Activated B cell treated with CpG ODN at 0.5 μM for 24 hours (primary cell): ENCODE measurements at regions of chr5 and their contacts with region 1.

Region 1: GRCh38 chr5:173808134-173808808 is 79.9 kb upstream of the CPEB4 start:
- DNase-seq: no peak
- ATAC-seq: no peak
- H3K4me3 Mint-ChIP-seq: no peak overlapping the region
- H3K27ac Mint-ChIP-seq: no peak overlapping the region
- H3K4me1 Mint-ChIP-seq: peaks cover 9% of the 10 kb centered on the region
- H3K27me3 Mint-ChIP-seq: no peaks in the 10 kb centered on the region
- CTCF ChIP-seq: no peak

Region 2: DNA sequence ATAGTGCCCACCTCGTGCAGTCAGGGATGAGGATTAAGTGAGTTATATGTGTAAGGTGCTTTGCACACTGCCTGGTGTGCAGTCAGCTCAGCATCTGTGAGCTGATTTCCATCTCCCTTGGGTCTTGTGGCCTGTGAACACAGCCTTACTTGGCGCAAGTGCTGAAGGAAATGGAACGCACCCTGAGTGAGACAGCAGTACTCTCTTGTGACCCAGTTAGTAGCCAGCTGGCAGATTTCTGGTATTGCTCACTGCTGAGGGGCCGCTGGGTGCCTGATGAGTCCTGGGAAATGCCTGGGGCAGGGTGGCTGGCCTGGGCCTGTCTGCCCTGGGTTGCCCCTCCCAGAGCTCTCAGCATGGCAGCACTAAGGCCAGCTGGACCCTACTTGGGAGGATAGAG is 100.9 kb before region 1 on chr5:
- CTCF ChIA-PET with region 1: no interaction called
- POLR2A ChIA-PET with region 1: no interaction called
- intact Hi-C with region 1: no loop called
- DNase-seq: peak; percentile 29
- ATAC-seq: peak; percentile 98
- H3K4me3 Mint-ChIP-seq: peak overlapping the region; percentile 4
- H3K27ac Mint-ChIP-seq: peak overlapping the region; percentile 60
- H3K4me1 Mint-ChIP-seq: peaks cover 27% of the 10 kb centered on the region
- H3K27me3 Mint-ChIP-seq: no peaks in the 10 kb centered on the region
- CTCF ChIP-seq: no peak

Region 3: GRCh38 chr5:173727839-173728778 is 80.2 kb before region 1 on chr5:
- CTCF ChIA-PET with region 1: no interaction called
- POLR2A ChIA-PET with region 1: no interaction called
- intact Hi-C with region 1: no loop called
- DNase-seq: no peak
- ATAC-seq: no peak
- H3K4me3 Mint-ChIP-seq: no peak overlapping the region
- H3K27ac Mint-ChIP-seq: no peak overlapping the region
- H3K4me1 Mint-ChIP-seq: peaks cover 13% of the 10 kb centered on the region
- H3K27me3 Mint-ChIP-seq: no peaks in the 10 kb centered on the region
- CTCF ChIP-seq: no peak

Region 4: DNA sequence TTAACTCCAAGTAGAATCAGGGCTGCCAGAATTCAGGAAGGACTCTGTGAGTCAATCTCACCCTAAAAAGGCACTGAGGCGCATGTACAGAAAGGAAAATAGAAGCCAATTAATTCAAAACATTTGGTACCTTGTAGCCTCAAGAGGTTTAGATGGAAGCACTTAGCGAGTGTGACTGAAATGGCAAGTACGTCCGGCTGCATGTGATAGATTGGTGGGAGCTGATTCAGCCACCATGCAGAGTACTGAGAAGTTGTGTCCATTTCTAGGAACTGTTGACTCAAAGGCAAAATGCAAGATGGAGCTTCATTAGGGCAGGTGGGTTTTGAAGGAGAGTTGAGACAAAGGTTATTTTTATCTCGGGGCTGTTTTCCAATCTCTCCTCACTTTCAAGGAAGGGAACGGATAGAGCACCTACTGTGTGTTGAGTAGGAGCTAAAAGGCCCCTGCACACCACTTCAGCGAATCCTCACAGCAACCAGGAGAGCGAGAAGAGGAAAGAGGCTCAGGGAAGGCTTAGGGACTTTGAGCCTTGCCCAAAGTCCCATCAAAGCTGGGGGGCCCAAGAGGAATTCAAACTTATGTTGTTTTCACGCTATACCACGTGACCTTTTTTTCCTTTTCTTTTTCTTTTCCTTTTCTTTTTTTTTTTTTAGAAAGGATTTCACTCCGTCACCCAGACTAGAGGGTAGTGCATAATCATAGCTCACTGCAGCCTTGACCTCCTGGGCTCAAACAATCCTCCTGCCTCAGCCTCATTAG is 45.3 kb after region 1 on chr5:
- CTCF ChIA-PET with region 1: no interaction called
- POLR2A ChIA-PET with region 1: no interaction called
- intact Hi-C with region 1: loop called (anchors 5 kb)
- DNase-seq: no peak
- ATAC-seq: no peak
- H3K4me3 Mint-ChIP-seq: no peak overlapping the region
- H3K27ac Mint-ChIP-seq: no peak overlapping the region
- H3K4me1 Mint-ChIP-seq: peaks cover 7% of the 10 kb centered on the region
- H3K27me3 Mint-ChIP-seq: peaks cover 6% of the 10 kb centered on the region
- CTCF ChIP-seq: no peak

Region 5: GRCh38 chr5:174571662-174572397 is 763.6 kb after region 1 on chr5:
- CTCF ChIA-PET with region 1: no interaction called
- POLR2A ChIA-PET with region 1: no interaction called
- intact Hi-C with region 1: no loop called
- DNase-seq: no peak
- ATAC-seq: no peak
- H3K4me3 Mint-ChIP-seq: no peak overlapping the region
- H3K27ac Mint-ChIP-seq: no peak overlapping the region
- H3K4me1 Mint-ChIP-seq: no peaks in the 10 kb centered on the region
- H3K27me3 Mint-ChIP-seq: peaks cover 3% of the 10 kb centered on the region
- CTCF ChIP-seq: no peak